ENCODE measurements at regions of chr14 and their contacts with region 1.

Region 1: GRCh38 chr14:60724137-60724619 is at the start of gene SIX4:
- DNase-seq: peak; percentile 87
- H3K4me3 ChIP-seq: peak within 1 kb of the TSS; percentile 47 to 67 (median 60)
- H3K27ac ChIP-seq: peak within 1 kb of the TSS; percentile 48 to 67 (median 64)
- H3K4me1 ChIP-seq: peaks cover 0 to 36% (median 23%) of the 10 kb centered on the region in 4 donors
- H3K27me3 ChIP-seq: peaks cover 15 to 68% (median 38%) of the 10 kb centered on the region in 3 donors
- CTCF ChIP-seq: no peak
- EP300 ChIP-seq: no peak
- POLR2A ChIP-seq: peak in 1 of 2 donors; percentile 17
- total RNA-seq, gene SIX4: 1.5 to 2.7 (median 1.9) TPM

Region 2: DNA sequence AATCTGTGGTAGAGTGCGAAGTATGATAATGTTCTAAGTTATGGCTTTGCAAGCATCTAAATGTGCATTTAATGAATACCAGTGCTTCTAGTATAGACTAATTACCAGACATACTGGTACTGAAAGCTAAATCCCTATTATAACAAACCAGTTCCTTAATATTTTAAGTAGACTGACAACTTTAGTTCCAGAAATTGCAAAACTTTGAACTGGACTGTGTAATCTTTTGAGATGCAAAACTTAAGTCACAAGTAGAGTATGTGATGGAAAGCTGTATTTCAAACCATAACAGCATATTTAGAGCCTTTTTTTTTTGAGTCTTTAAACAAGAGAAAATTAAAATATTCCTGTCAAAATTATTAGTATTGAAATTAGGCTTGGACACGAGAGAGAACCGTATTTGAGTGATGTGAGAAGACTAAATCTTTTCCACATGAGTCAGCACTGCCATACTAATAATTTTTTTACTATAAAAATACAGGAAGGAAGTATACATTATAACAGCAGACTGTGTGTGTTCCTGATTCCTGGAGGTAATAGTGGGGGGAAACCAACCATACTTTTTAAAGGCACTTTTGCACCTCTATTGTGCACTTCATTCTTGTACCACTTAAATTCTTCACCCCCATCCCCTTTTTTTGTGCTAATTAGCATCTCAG is 429.6 kb before region 1 on chr14:
- intact Hi-C with region 1: no loop called
- DNase-seq: no peak
- H3K4me3 ChIP-seq: no peak overlapping the region
- H3K27ac ChIP-seq: no peak overlapping the region
- H3K4me1 ChIP-seq: peaks cover 0 to 3% (median 0%) of the 10 kb centered on the region in 4 donors
- H3K27me3 ChIP-seq: no peaks in the 10 kb centered on the region
- CTCF ChIP-seq: no peak
- EP300 ChIP-seq: no peak
- POLR2A ChIP-seq: no peak

Region 3: GRCh38 chr14:60789656-60790055 is 65.5 kb after region 1 on chr14:
- intact Hi-C with region 1: no loop called
- DNase-seq: no peak
- H3K4me3 ChIP-seq: no peak overlapping the region
- H3K27ac ChIP-seq: no peak overlapping the region
- H3K4me1 ChIP-seq: no peaks in the 10 kb centered on the region
- H3K27me3 ChIP-seq: no peaks in the 10 kb centered on the region
- CTCF ChIP-seq: no peak
- EP300 ChIP-seq: no peak
- POLR2A ChIP-seq: no peak

Region 4: DNA sequence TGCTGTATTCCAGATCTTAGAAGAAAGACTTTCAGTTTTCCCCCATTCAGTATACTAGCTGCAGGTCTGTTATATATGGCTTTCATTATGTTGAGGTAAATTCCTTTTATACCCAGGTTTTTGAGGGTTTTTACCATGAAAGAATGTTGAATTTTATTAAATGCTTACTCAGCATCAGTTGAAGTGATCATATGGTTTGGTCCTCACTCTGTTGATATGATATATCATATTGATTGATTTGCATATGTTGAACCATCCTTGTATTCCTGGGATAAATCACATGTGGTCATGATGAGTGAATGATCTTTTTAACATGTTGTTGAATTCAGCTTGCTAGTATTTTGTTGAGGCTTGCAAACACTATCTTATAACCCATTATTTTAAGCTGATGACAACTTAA is 160.0 kb after region 1 on chr14:
- intact Hi-C with region 1: no loop called
- DNase-seq: no peak
- H3K4me3 ChIP-seq: no peak overlapping the region
- H3K27ac ChIP-seq: no peak overlapping the region
- H3K4me1 ChIP-seq: no peaks in the 10 kb centered on the region
- H3K27me3 ChIP-seq: no peaks in the 10 kb centered on the region
- CTCF ChIP-seq: no peak
- EP300 ChIP-seq: no peak
- POLR2A ChIP-seq: no peak

Region 5: DNA sequence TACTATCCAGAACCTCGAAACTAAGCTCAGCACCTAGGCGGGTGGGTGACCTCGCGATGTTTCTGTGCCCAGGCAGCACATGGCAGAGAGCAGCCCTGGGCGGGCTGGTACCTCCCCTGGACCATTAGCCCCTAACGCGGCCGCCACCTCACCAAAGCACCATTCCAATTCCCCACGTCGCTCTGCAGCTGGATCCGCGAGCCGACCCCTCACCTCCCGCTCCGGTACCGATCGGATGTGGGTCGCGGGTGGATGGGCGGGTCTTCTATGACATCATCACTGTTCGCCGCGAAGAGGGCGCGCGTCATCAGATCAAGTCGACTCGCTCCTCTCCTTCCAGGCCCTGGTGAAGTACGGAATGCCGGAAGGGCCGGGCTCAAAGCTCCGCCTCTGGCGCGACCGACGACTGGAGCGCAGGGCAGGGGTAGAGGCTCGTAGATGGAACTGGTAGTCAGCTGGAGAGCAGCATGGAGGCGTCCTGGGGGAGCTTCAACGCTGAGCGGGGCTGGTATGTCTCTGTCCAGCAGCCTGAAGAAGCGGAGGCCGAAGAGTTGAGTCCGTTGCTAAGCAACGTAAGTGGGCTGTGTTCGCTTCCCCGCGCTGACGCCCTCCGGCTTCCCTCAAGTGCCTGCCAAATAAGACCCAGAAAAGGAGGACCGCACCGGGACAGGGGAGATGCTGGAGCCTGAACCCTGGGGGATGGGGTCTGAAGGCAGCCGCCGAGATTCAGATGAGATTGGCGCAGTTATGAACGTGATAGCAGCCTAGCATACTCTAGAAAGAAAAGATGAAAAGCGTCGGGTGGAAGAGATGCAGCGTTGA is 256.8 kb after region 1 on chr14 and contains the starts of genes SLC38A6 and TRMT5:
- intact Hi-C with region 1: loop called (anchors 5 kb)
- DNase-seq: peak; percentile 97
- H3K4me3 ChIP-seq: peak within 1 kb of the TSS; percentile 62 to 75 (median 72)
- H3K27ac ChIP-seq: peak within 1 kb of the TSS; percentile 80 to 88 (median 84)
- H3K4me1 ChIP-seq: peaks cover 0 to 37% (median 27%) of the 10 kb centered on the region in 4 donors
- H3K27me3 ChIP-seq: no peaks in the 10 kb centered on the region
- CTCF ChIP-seq: no peak
- EP300 ChIP-seq: peak in 1 of 4 donors; percentile 78
- POLR2A ChIP-seq: no peak
- total RNA-seq, gene SLC38A6: 11.8 to 27.3 (median 23.0) TPM
- total RNA-seq, gene TRMT5: 7.2 to 16.9 (median 10.8) TPM

Region 6: GRCh38 chr14:61395115-61395725 is 671.0 kb after region 1 on chr14:
- intact Hi-C with region 1: no loop called
- DNase-seq: no peak
- H3K4me3 ChIP-seq: no peak overlapping the region
- H3K27ac ChIP-seq: no peak overlapping the region
- H3K4me1 ChIP-seq: no peaks in the 10 kb centered on the region
- H3K27me3 ChIP-seq: no peaks in the 10 kb centered on the region
- CTCF ChIP-seq: no peak
- EP300 ChIP-seq: no peak
- POLR2A ChIP-seq: no peak

Measured in sigmoid colon (tissue), 7 donors.